H1 (cell line): ENCODE measurements at regions of chr12 and their contacts with region 1.

Region 1: DNA sequence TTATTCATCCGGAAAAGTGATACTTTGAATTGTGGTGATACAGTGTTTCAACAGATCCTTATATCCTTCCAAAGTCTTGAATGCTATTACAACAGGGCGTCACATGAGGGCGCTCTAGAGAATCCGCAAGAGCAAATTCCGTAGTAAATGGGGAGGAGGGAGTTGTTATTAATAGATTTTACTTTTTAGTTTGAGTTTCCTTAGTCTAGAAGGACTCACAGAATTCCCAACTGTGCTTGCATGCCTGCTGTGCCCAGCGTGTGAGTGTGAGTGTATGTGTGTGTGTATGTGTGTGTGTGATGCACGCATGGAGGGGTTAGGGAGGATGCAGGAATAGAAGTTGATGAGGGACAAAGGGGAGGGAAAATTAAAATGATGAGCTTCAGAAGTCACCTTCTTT is 375.3 kb downstream of the C12orf75 start:
- DNase-seq: peak in 1 of 2 experiments; percentile 78
- H3K4me3 ChIP-seq: no peak overlapping the region
- H3K27ac ChIP-seq: no peak overlapping the region
- H3K4me1 ChIP-seq: peaks cover 0 to 13% (median 6%) of the 10 kb centered on the region in 4 experiments; a peak in 5 of 7 replicates
- H3K27me3 ChIP-seq: peaks cover 0 to 2% (median under 1%) of the 10 kb centered on the region in 4 experiments; a peak in 1 of 7 replicates
- CTCF ChIP-seq: peak in 2 of 3 experiments; percentile 62 to 71; a peak in 2 of 4 replicates
- EP300 ChIP-seq: no peak
- POLR2A ChIP-seq: no peak
- RAD21 ChIP-seq: peak; percentile 65 to 72

Region 2: GRCh38 chr12:105226219-105226618 is 479.5 kb before region 1 on chr12:
- CTCF ChIA-PET with region 1: no interaction called
- POLR2A ChIA-PET with region 1: no interaction called
- DNase-seq: no peak
- H3K4me3 ChIP-seq: no peak overlapping the region
- H3K27ac ChIP-seq: no peak overlapping the region
- H3K4me1 ChIP-seq: 0 out of 7 replicates have a peak, but pooled peaks cover 0 to 5% (median 0%) of the 10 kb centered on the region in 4 experiments
- H3K27me3 ChIP-seq: no peaks in the 10 kb centered on the region
- CTCF ChIP-seq: no peak
- EP300 ChIP-seq: no peak
- POLR2A ChIP-seq: no peak
- RAD21 ChIP-seq: no peak

Region 3: DNA sequence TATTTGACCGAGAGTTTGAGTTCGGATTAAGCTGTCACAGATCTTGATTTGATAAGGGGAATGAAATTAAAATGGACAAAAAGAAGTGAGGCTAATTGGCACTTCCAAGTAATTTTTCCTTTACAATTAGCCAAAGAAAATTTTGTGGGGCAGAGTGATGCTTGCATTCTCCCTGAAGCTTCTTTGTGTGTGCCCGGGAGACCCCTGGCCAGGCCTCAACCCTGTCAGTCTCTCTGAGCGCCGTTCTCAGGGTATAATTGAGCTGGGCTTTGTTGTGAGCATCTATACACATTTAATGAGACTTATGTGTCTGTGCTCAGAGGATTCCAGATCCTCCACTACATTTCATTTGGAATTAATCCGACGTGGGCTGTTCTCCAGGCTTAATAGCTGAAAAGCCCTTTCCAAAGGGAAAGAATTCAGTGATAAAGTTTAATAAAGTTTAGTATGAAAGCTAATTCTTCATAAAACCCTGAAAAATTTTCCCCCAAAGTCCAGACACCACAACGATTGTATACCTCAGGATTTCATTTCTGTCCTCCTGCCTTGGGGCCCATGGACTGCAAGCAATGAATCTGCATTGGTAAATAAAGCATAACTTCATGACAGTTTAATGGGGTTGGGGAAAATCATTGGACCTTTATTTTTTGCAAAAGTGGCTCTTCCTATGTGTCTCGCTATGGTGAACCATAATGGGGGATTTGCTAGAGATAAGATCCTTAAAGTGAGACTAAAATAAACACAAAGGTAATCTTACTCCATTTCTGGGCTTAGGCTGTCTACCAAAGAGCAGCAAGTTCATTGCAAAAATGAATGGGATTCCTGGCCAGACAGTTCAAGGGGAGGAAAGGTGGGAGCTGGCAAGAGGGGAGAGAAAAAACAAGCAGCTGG is 82.7 kb before region 1 on chr12:
- CTCF ChIA-PET with region 1: interaction called, 10 read pairs
- POLR2A ChIA-PET with region 1: no interaction called
- DNase-seq: no peak
- H3K4me3 ChIP-seq: no peak overlapping the region
- H3K27ac ChIP-seq: no peak overlapping the region
- H3K4me1 ChIP-seq: no peaks in the 10 kb centered on the region; a peak in 2 of 7 replicates
- H3K27me3 ChIP-seq: no peaks in the 10 kb centered on the region
- CTCF ChIP-seq: no peak
- EP300 ChIP-seq: no peak
- POLR2A ChIP-seq: no peak
- RAD21 ChIP-seq: no peak

Region 4: DNA sequence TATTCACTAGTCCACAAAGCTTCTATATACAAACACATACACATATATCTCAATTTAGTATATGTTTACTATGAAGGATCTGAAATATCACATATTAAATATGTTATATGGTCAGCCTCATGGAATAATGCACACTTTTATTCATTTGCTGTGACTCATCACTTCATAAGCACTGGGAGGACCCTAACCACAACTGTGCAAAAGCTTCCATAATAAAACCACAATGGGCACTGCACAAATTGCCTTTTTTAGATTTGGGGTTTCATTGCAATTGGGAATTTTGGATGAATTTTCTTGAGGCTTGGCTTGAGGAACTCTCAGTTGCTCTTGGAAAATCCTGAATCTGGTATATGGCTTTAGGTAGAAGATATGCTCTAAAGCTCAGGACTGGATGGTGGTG is 24.2 kb after region 1 on chr12:
- CTCF ChIA-PET with region 1: interaction called, 19 read pairs
- POLR2A ChIA-PET with region 1: no interaction called
- DNase-seq: no peak
- H3K4me3 ChIP-seq: no peak overlapping the region
- H3K27ac ChIP-seq: no peak overlapping the region
- H3K4me1 ChIP-seq: no peaks in the 10 kb centered on the region
- H3K27me3 ChIP-seq: no peaks in the 10 kb centered on the region
- CTCF ChIP-seq: no peak
- EP300 ChIP-seq: no peak
- POLR2A ChIP-seq: no peak
- RAD21 ChIP-seq: no peak

Region 5: GRCh38 chr12:105769486-105769885 is 63.7 kb after region 1 on chr12:
- CTCF ChIA-PET with region 1: interaction called, 22 read pairs
- POLR2A ChIA-PET with region 1: no interaction called
- DNase-seq: no peak
- H3K4me3 ChIP-seq: no peak overlapping the region
- H3K27ac ChIP-seq: no peak overlapping the region
- H3K4me1 ChIP-seq: 0 out of 7 replicates have a peak, but pooled peaks cover 0 to 2% (median 0%) of the 10 kb centered on the region in 4 experiments
- H3K27me3 ChIP-seq: no peaks in the 10 kb centered on the region
- CTCF ChIP-seq: no peak
- EP300 ChIP-seq: no peak
- POLR2A ChIP-seq: no peak
- RAD21 ChIP-seq: no peak

Region 6: DNA sequence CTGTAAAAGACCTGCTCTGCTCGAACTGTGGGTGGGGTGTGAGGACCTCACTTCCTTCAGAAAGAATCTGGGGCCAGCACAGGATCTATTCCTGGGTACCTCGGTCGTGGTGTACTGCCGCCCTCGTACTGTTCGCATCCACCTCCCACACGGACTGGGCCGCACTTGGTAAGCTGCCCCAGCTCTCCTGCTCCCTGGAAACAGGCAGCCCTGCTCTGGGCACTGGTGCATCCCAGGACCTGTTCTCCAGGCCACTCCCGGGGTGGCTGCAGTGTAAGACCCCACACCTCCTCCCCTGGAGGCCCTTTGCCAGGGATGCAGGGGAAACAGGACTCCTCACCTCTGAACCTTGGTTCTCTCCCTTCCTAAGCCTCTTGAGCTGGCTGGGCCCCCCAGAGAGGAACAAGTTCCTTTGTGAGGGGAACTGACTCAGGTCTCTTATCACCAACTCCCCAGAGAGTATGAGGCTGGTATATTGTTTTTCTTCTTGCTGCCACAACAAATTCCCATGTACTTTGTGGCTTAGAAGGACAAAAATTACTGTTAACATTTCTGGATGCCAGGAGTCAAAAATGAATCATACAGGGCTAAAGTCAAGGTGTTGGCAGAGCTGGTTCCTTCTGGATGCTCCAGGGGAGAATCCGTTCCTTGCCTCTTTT is 156.5 kb after region 1 on chr12:
- CTCF ChIA-PET with region 1: no interaction called
- POLR2A ChIA-PET with region 1: no interaction called
- DNase-seq: no peak
- H3K4me3 ChIP-seq: no peak overlapping the region
- H3K27ac ChIP-seq: no peak overlapping the region
- H3K4me1 ChIP-seq: peaks cover 0 to 5% (median 0%) of the 10 kb centered on the region in 4 experiments; a peak in 1 of 7 replicates
- H3K27me3 ChIP-seq: no peaks in the 10 kb centered on the region
- CTCF ChIP-seq: no peak
- EP300 ChIP-seq: no peak
- POLR2A ChIP-seq: no peak
- RAD21 ChIP-seq: no peak

Region 7: DNA sequence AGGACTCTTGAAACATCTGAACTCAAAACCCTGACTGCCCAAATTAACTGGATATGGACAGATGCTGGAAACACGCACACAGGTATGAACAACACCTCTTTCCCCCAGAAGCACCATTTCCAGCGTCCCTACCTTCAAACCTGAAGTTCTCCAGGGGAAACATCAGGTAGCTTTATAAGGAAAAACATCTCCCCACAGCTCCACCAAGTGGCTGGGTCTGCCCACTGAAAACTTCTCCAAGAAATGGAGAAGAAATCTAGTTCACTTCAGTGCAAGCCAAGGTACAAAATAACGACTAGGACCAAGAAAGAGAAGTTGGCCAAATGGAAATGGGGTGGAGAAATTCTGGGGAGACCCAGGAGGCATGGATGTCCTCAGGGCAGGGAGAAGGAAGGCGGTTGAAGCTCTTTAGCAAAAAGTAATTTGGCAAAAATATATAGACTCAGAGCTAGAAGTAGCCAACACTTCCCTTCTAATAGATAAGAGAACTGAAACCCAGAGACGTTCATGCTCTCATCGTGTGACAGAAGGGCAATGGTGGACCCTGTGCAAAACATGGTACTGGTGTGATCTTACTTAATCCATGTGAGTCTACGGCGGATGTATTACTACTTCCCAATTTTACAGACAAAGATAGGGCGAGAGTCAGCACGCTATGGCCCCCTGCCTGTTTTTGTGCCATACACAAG is 443.5 kb after region 1 on chr12:
- CTCF ChIA-PET with region 1: interaction called, 21 read pairs
- POLR2A ChIA-PET with region 1: no interaction called
- DNase-seq: no peak
- H3K4me3 ChIP-seq: no peak overlapping the region
- H3K27ac ChIP-seq: no peak overlapping the region
- H3K4me1 ChIP-seq: peaks cover 0 to 7% (median 1%) of the 10 kb centered on the region in 4 experiments; a peak in 2 of 7 replicates
- H3K27me3 ChIP-seq: no peaks in the 10 kb centered on the region
- CTCF ChIP-seq: peak; percentile 3 to 69 (median 53); a peak in 3 of 4 replicates
- EP300 ChIP-seq: no peak
- POLR2A ChIP-seq: no peak
- RAD21 ChIP-seq: peak; percentile 56 to 70

Region 8: GRCh38 chr12:106179086-106179485 is 473.3 kb after region 1 on chr12:
- CTCF ChIA-PET with region 1: no interaction called
- POLR2A ChIA-PET with region 1: no interaction called
- DNase-seq: no peak
- H3K4me3 ChIP-seq: no peak overlapping the region
- H3K27ac ChIP-seq: no peak overlapping the region
- H3K4me1 ChIP-seq: peaks cover 0 to 3% (median 0%) of the 10 kb centered on the region in 4 experiments; a peak in 1 of 7 replicates
- H3K27me3 ChIP-seq: no peaks in the 10 kb centered on the region
- CTCF ChIP-seq: no peak
- EP300 ChIP-seq: no peak
- POLR2A ChIP-seq: no peak
- RAD21 ChIP-seq: no peak